CD4-positive, alpha-beta T cell (primary cell): ENCODE measurements at regions of chr13 and their contacts with region 1.

Region 1: GRCh38 chr13:19959831-19960652 is 1.5 kb downstream of the ZMYM2 start:
- DNase-seq: peak; percentile 75 to 96 (median 81)
- ATAC-seq: peak; percentile 55
- H3K4me3 ChIP-seq: peak overlapping the region; percentile 81
- H3K4me3 Mint-ChIP-seq: peak overlapping the region; percentile 98
- H3K27ac ChIP-seq: peak overlapping the region; percentile 81 to 93
- H3K27ac Mint-ChIP-seq: peak overlapping the region; percentile 99
- H3K4me1 ChIP-seq: peaks cover 30% of the 10 kb centered on the region
- H3K4me1 Mint-ChIP-seq: peaks cover 28% of the 10 kb centered on the region
- H3K27me3 ChIP-seq: no peaks in the 10 kb centered on the region
- H3K27me3 Mint-ChIP-seq: no peaks in the 10 kb centered on the region
- CTCF ChIP-seq: peak; percentile 87

Region 2: DNA sequence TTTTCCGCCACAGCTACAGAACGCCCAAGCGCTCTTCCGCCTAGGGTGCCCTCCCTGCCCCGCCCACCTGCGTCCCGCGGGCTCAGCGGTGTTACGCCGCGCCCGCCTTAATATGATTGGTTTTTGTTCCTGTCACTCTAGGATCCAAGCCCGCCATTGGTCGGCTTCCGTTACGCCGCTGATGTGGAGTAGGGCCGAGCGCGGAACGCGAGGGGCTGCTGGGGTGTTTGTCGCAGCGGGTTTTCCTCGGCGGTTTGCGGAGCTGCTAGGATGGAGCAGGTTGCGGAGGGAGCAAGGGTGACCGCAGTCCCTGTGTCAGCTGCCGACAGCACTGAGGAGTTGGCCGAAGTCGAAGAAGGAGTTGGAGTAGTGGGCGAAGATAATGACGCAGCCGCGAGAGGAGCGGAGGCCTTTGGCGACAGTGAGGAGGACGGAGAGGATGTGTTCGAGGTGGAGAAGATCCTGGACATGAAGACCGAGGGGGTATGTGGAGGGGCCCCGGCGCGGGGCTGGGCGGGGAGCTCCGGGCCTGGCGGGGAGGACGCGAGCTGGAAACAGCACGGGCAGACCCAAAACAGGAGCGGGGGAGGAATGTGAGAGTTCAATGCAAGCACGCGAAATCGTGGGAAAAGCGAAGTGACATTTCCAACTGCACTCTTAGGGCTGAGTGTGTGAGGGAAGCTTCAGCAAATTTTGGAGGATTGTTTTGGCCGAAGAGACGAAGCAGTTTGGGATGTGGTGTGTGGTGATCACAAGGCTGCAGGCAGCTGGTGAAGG is 326.4 kb before region 1 on chr13 and contains the start of gene MPHOSPH8:
- CTCF ChIA-PET with region 1: interaction called, 4 read pairs
- POLR2A ChIA-PET with region 1: interaction called, 6 read pairs
- intact Hi-C with region 1: loop called in 1 of 2 experiments (anchors 5 kb)
- DNase-seq: peak; percentile 86 to 98 (median 92)
- ATAC-seq: peak; percentile 96
- H3K4me3 ChIP-seq: peak within 1 kb of the TSS; percentile 84
- H3K4me3 Mint-ChIP-seq: peak within 1 kb of the TSS; percentile 100
- H3K27ac ChIP-seq: peak within 1 kb of the TSS; percentile 76 to 79
- H3K27ac Mint-ChIP-seq: peak within 1 kb of the TSS; percentile 97
- H3K4me1 ChIP-seq: peaks cover 29% of the 10 kb centered on the region
- H3K4me1 Mint-ChIP-seq: peaks cover 38% of the 10 kb centered on the region
- H3K27me3 ChIP-seq: no peaks in the 10 kb centered on the region
- H3K27me3 Mint-ChIP-seq: no peaks in the 10 kb centered on the region
- CTCF ChIP-seq: no peak
- total RNA-seq, gene MPHOSPH8: 48.0 to 51.2 TPM

Region 3: GRCh38 chr13:19782049-19782726 is 177.9 kb before region 1 on chr13:
- CTCF ChIA-PET with region 1: no interaction called
- POLR2A ChIA-PET with region 1: interaction called, 15 read pairs
- intact Hi-C with region 1: loop called (anchors 2 kb)
- DNase-seq: peak in 13 of 14 experiments; percentile 30 to 74 (median 46)
- ATAC-seq: peak; percentile 49
- H3K4me3 ChIP-seq: peak overlapping the region; percentile 100
- H3K4me3 Mint-ChIP-seq: peak overlapping the region; percentile 91
- H3K27ac ChIP-seq: peak overlapping the region; percentile 85 to 96
- H3K27ac Mint-ChIP-seq: peak overlapping the region; percentile 95
- H3K4me1 ChIP-seq: peaks cover 16% of the 10 kb centered on the region
- H3K4me1 Mint-ChIP-seq: peaks cover 11% of the 10 kb centered on the region
- H3K27me3 ChIP-seq: no peaks in the 10 kb centered on the region
- H3K27me3 Mint-ChIP-seq: no peaks in the 10 kb centered on the region
- CTCF ChIP-seq: no peak

Region 4: DNA sequence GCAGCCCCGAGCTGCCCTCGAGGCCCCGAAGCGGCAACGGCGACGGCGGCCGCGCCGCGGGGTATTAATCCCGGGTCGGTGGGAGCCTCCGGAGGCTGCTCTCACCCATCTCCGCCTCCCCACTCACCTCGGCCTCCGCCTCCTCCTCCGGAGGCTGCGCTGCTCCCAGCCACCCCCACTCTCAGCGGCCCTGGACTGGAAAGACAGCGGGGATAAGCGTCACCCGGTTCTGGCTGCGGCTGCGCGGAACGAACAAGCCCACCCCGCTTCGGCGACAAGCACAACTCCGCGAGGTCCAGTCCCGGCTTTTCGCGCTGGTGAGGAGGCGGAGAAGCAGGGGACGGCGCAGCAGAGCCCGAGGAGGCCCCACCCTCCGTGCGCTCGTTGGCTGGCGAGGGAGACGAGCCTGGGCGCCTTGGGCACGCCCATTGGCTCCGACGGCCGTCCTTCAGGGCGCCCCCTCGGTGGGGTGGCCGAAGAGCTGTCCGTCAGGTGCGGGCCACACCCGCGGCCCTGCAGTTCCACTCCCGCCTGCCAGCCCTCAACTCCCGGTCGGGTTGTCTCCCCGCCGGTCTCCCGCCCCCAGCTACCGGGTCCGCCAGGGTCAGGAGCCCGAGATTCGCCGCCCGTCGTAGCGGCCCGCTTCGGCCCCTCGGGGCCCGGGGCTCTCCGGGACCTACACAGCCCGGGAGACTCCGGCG is 96.6 kb before region 1 on chr13 and contains the start of gene ZMYM5:
- CTCF ChIA-PET with region 1: interaction called, 12 read pairs
- POLR2A ChIA-PET with region 1: interaction called, 45 read pairs
- intact Hi-C with region 1: loop called (anchors 1 kb)
- DNase-seq: peak; percentile 85 to 98 (median 93)
- ATAC-seq: peak; percentile 81
- H3K4me3 ChIP-seq: peak within 1 kb of the TSS; percentile 84
- H3K4me3 Mint-ChIP-seq: peak within 1 kb of the TSS; percentile 98
- H3K27ac ChIP-seq: peak within 1 kb of the TSS; percentile 92
- H3K27ac Mint-ChIP-seq: peak within 1 kb of the TSS; percentile 91
- H3K4me1 ChIP-seq: peaks cover 33% of the 10 kb centered on the region
- H3K4me1 Mint-ChIP-seq: peaks cover 37% of the 10 kb centered on the region
- H3K27me3 ChIP-seq: no peaks in the 10 kb centered on the region
- H3K27me3 Mint-ChIP-seq: no peaks in the 10 kb centered on the region
- CTCF ChIP-seq: no peak
- total RNA-seq, gene ZMYM5: 29.2 to 32.1 TPM

Region 5: DNA sequence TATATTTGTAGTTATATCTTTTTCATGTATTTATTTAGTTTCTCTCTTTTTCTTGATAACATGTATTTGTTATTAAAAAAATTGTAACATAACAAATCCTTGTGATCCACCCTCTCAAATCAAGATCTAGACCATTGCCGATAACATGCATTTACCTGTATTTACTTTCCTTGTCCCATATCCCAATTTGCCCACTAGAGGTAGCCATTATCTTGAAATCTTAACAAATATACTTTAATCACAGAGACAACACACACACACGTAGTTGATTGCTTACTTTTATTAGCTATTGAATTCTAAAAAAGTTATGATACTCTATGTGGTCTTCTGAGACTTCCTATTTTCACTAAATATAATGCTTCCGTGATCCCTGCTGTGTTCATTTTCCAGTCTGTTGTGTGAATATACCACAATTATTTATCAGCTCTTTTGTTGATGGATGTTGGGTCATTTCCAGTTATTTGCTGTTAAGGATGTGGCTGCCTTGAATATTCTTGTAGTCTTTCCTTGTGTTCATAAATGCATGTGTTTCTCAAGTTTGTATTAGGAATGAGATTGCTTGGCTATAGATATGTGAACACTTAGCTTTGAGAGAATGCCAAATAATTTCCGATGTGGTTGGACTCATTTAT is 32.8 kb before region 1 on chr13:
- CTCF ChIA-PET with region 1: interaction called, 5 read pairs
- POLR2A ChIA-PET with region 1: interaction called, 3 read pairs
- intact Hi-C with region 1: loop called in 1 of 2 experiments (anchors 2 kb)
- DNase-seq: peak in 3 of 14 experiments; percentile 51 to 65 (median 58)
- ATAC-seq: no peak
- H3K4me3 ChIP-seq: no peak overlapping the region
- H3K4me3 Mint-ChIP-seq: no peak overlapping the region
- H3K27ac ChIP-seq: no peak overlapping the region
- H3K27ac Mint-ChIP-seq: no peak overlapping the region
- H3K4me1 ChIP-seq: no peaks in the 10 kb centered on the region
- H3K4me1 Mint-ChIP-seq: no peaks in the 10 kb centered on the region
- H3K27me3 ChIP-seq: no peaks in the 10 kb centered on the region
- H3K27me3 Mint-ChIP-seq: no peaks in the 10 kb centered on the region
- CTCF ChIP-seq: peak; percentile 72

Region 6: GRCh38 chr13:20566898-20567874 is 607.1 kb after region 1 on chr13 and contains the start of gene IFT88:
- CTCF ChIA-PET with region 1: no interaction called
- POLR2A ChIA-PET with region 1: no interaction called
- intact Hi-C with region 1: loop called in 1 of 2 experiments (anchors 10 kb)
- DNase-seq: peak; percentile 57 to 87 (median 78)
- ATAC-seq: peak; percentile 87
- H3K4me3 ChIP-seq: peak within 1 kb of the TSS; percentile 69
- H3K4me3 Mint-ChIP-seq: peak within 1 kb of the TSS; percentile 96
- H3K27ac ChIP-seq: peak within 1 kb of the TSS; percentile 53 to 60
- H3K27ac Mint-ChIP-seq: peak within 1 kb of the TSS; percentile 82
- H3K4me1 ChIP-seq: peaks cover 15% of the 10 kb centered on the region
- H3K4me1 Mint-ChIP-seq: peaks cover 19% of the 10 kb centered on the region
- H3K27me3 ChIP-seq: no peaks in the 10 kb centered on the region
- H3K27me3 Mint-ChIP-seq: no peaks in the 10 kb centered on the region
- CTCF ChIP-seq: no peak
- total RNA-seq, gene IFT88: 9.0 to 9.5 TPM

Region 7: DNA sequence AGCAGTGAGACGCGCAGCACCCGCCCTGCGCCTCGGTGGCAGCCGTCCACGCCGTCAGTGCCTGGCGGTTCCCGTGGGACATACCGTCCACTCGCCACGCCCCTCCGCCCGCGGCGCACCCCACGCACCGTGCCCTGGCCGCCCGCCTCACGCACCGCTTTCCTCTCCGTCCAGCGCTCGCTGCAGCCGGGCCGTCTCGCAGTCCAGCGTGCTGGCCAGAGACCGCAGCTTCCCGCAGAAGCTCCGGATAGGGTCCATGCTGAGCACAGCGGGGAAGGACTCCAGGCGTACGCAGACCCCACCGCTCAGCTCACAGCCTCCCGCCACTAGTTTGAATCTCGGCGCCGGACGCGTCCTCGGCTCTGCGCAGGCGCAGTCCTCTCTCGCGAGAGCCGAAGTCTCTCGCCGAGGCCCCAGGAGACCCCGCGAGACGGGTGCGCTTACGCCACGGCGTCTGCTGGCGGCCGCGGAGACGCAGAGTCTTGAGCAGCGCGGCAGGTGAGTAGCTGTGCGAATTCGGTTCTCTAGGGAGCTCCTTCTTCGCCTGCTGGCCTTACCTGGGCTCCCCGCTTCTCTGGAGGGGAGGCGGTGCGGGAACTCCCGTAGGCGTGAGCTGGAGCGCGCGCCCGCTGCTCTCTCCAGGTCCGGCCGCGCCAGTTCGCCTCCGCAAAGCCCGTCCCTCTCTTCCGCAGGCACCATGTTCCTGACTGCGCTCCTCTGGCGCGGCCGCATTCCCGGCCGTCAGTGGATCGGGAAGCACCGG is 1216.4 kb after region 1 on chr13 and contains the starts of genes MRPL57 and SKA3:
- CTCF ChIA-PET with region 1: no interaction called
- POLR2A ChIA-PET with region 1: interaction called, 4 read pairs
- intact Hi-C with region 1: loop called in 1 of 2 experiments (anchors 10 kb)
- DNase-seq: peak; percentile 87 to 98 (median 92)
- ATAC-seq: peak; percentile 98
- H3K4me3 ChIP-seq: peak within 1 kb of the TSS; percentile 100
- H3K4me3 Mint-ChIP-seq: peak within 1 kb of the TSS; percentile 90
- H3K27ac ChIP-seq: peak within 1 kb of the TSS; percentile 83 to 95
- H3K27ac Mint-ChIP-seq: peak within 1 kb of the TSS; percentile 96
- H3K4me1 ChIP-seq: peaks cover 22% of the 10 kb centered on the region
- H3K4me1 Mint-ChIP-seq: peaks cover 29% of the 10 kb centered on the region
- H3K27me3 ChIP-seq: no peaks in the 10 kb centered on the region
- H3K27me3 Mint-ChIP-seq: no peaks in the 10 kb centered on the region
- CTCF ChIP-seq: no peak
- total RNA-seq, gene MRPL57: 10.0 to 10.5 TPM
- total RNA-seq, gene SKA3: 0.30 TPM in 1 of 2 experiments, not detected in the other